AG04450 (cell line): ENCODE measurements at regions of chr13 and their contacts with region 1.

Region 1: DNA sequence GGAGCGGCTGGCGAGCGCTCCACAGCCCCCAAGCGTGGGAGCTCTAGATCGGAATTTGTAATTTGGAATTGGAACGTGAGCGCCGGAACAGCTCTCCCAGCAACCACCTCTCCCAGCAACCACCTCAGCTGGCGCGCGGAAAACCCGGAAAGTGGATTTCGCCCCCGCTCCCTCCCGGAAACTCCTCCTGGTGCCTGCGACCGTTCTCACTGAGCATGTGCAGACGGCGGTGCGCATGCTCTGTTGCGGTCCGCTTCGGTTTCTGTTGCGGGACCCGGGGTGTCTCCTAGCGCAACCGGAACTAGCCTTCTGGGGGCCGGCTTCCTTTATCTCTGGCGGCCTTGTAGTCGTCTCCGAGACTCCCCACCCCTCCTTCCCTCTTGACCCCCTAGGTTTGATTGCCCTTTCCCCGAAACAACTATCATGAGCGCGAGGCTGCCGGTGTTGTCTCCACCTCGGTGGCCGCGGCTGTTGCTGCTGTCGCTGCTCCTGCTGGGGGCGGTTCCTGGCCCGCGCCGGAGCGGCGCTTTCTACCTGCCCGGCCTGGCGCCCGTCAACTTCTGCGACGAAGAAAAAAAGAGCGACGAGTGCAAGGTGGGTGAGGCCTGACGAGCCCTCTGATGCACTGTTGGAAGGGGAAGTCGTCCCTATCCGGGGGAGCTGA is at the start of gene TM9SF2:
- DNase-seq: peak; percentile 95
- H3K4me3 ChIP-seq: peak within 1 kb of the TSS; percentile 94
- H3K27ac ChIP-seq: peak within 1 kb of the TSS; percentile 42
- H3K27me3 ChIP-seq: no peaks in the 10 kb centered on the region
- CTCF ChIP-seq: no peak
- polyA plus RNA-seq, gene TM9SF2: 86.2 and 125 TPM in 2 replicates

Region 2: GRCh38 chr13:99136427-99136954 is 364.8 kb before region 1 on chr13:
- CTCF ChIA-PET with region 1: no interaction called
- POLR2A ChIA-PET with region 1: no interaction called
- DNase-seq: no peak
- H3K4me3 ChIP-seq: no peak overlapping the region
- H3K27ac ChIP-seq: no peak overlapping the region
- H3K27me3 ChIP-seq: peaks cover 2% of the 10 kb centered on the region
- CTCF ChIP-seq: no peak

Region 3: GRCh38 chr13:99442273-99442895 is 58.9 kb before region 1 on chr13:
- CTCF ChIA-PET with region 1: interaction called, 77 read pairs
- POLR2A ChIA-PET with region 1: no interaction called
- DNase-seq: no peak
- H3K4me3 ChIP-seq: no peak overlapping the region
- H3K27ac ChIP-seq: no peak overlapping the region
- H3K27me3 ChIP-seq: peaks cover 18% of the 10 kb centered on the region
- CTCF ChIP-seq: peak; percentile 92

Region 4: GRCh38 chr13:99484473-99484872 is 16.8 kb before region 1 on chr13:
- CTCF ChIA-PET with region 1: interaction called, 16 read pairs
- POLR2A ChIA-PET with region 1: no interaction called
- DNase-seq: peak; percentile 58
- H3K4me3 ChIP-seq: no peak overlapping the region
- H3K27ac ChIP-seq: no peak overlapping the region
- H3K27me3 ChIP-seq: peaks cover 9% of the 10 kb centered on the region
- CTCF ChIP-seq: no peak

Region 5: GRCh38 chr13:99516153-99516929 is 15.0 kb after region 1 on chr13:
- CTCF ChIA-PET with region 1: interaction called, 15 read pairs
- POLR2A ChIA-PET with region 1: no interaction called
- DNase-seq: no peak
- H3K4me3 ChIP-seq: no peak overlapping the region
- H3K27ac ChIP-seq: no peak overlapping the region
- H3K27me3 ChIP-seq: no peaks in the 10 kb centered on the region
- CTCF ChIP-seq: no peak

Region 6: GRCh38 chr13:99980201-99980823 is 479.0 kb after region 1 on chr13:
- CTCF ChIA-PET with region 1: no interaction called
- POLR2A ChIA-PET with region 1: no interaction called
- DNase-seq: no peak
- H3K4me3 ChIP-seq: peak overlapping the region; percentile 44
- H3K27ac ChIP-seq: no peak overlapping the region
- H3K27me3 ChIP-seq: peaks cover 81% of the 10 kb centered on the region
- CTCF ChIP-seq: no peak

Region 7: DNA sequence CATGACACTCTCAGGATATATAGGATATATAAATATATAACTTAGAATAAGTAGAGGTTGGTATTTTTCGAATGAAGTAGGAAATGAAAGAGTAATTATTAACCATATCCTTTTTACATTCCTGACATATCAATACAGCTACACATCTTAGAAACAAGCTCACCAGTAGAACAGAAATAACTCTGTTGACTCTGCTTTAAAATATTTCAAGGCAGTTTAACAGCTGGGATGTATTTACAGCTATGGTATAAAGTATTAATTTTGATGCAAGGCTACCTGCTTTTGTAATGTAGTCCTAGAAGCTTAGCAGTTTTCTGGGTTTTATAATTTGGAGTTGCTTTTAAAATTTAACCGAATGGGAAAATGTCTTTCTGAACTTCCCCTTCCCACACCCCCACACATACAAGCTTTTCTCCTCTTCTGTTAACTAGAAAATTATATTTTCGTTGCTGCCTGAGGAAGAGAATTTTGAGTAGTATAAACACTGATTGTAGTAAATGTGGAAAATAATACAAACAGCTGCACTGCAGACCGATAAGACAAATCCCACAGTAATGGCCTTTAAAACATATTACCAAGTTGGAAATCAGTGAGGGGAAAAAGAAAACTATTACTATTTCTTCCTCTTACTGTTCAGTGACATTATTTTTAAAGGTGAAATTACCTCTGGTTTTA is 939.6 kb after region 1 on chr13:
- CTCF ChIA-PET with region 1: no interaction called
- POLR2A ChIA-PET with region 1: no interaction called
- DNase-seq: peak; percentile 21
- H3K4me3 ChIP-seq: peak overlapping the region; percentile 14; the same call in 1 of the 2 replicates
- H3K27ac ChIP-seq: no peak overlapping the region
- H3K27me3 ChIP-seq: no peaks in the 10 kb centered on the region
- CTCF ChIP-seq: no peak